Activated T-helper 1 cell treated with anti-CD3 and anti-CD28 coated beads, Interleukin-12 subunit alpha, Interleukin-12 subunit beta, Interleukin-2, Interleukin-4 antibody, amounts not matched to agents 30 ng/mL and 10 ng/mL and 1 ng/mL, durations not matched to agents 14 hours and 24 hours and 36 hours (primary cell): ENCODE measurements at regions of chrX and their contacts with region 1.

Region 1: DNA sequence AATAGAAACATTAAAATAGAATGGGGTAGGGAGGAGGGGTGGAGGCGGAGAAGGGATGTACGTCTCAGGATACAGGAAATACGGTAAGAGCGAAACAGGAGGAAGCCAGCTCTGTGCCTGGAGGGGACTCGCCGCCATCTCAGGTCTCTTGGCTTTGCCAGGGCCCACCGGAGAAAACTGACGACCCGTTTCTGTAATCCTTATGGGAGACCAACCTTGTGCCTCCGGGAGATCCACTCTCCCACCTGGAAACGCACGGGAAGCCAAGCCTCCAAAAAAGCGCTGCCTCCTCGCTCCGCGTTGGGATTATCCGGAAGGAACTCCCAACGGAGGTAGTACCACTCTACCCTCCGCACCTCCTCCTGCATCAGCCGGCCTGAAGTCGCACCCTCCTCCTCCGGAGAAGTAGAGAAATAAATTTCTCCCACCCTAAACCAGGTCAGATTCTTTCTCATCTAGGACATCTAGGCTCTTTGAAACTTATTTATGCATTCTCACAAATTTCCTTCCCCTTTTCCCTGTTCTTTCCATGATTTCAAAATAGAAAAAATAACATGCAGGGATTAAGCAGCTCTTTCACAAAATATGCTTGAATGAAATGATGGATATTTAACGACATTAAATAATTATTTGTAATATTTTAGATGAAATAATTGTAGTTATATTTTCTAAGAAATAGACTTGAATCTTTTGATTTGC is at the start of gene NBDY:
- DNase-seq: peak; percentile 2
- H3K4me3 Mint-ChIP-seq: peak within 1 kb of the TSS; percentile 92
- H3K27ac Mint-ChIP-seq: peak within 1 kb of the TSS; percentile 86
- H3K4me1 Mint-ChIP-seq: peaks cover 21% of the 10 kb centered on the region
- H3K27me3 Mint-ChIP-seq: no peaks in the 10 kb centered on the region
- total RNA-seq, gene NBDY: 29.3 and 36.7 TPM in 2 replicates

Region 2: GRCh38 chrX:55717521-55718497 is 1011.5 kb before region 1 on chrX and contains the start of gene RRAGB:
- intact Hi-C with region 1: loop called (anchors 2 kb)
- DNase-seq: peak; percentile 84
- H3K4me3 Mint-ChIP-seq: peak within 1 kb of the TSS; percentile 89
- H3K27ac Mint-ChIP-seq: peak within 1 kb of the TSS; percentile 73
- H3K4me1 Mint-ChIP-seq: peaks cover 36% of the 10 kb centered on the region
- H3K27me3 Mint-ChIP-seq: no peaks in the 10 kb centered on the region
- total RNA-seq, gene RRAGB: 4.4 and 6.1 TPM in 2 replicates

Region 3: GRCh38 chrX:56232221-56233082 is 496.8 kb before region 1 on chrX and contains the start of gene KLF8:
- intact Hi-C with region 1: loop called (anchors 1 kb)
- DNase-seq: peak; percentile 25
- H3K4me3 Mint-ChIP-seq: peak within 1 kb of the TSS; percentile 87
- H3K27ac Mint-ChIP-seq: peak within 1 kb of the TSS; percentile 78
- H3K4me1 Mint-ChIP-seq: peaks cover 35% of the 10 kb centered on the region
- H3K27me3 Mint-ChIP-seq: peaks cover 4% of the 10 kb centered on the region
- total RNA-seq, gene KLF8: 6.3 and 6.7 TPM in 2 replicates

Region 4: GRCh38 chrX:56366901-56367300 is 362.4 kb before region 1 on chrX:
- intact Hi-C with region 1: loop called (anchors 5 kb)
- DNase-seq: no peak
- H3K4me3 Mint-ChIP-seq: no peak overlapping the region
- H3K27ac Mint-ChIP-seq: no peak overlapping the region
- H3K4me1 Mint-ChIP-seq: peaks cover 56% of the 10 kb centered on the region
- H3K27me3 Mint-ChIP-seq: no peaks in the 10 kb centered on the region

Region 5: DNA sequence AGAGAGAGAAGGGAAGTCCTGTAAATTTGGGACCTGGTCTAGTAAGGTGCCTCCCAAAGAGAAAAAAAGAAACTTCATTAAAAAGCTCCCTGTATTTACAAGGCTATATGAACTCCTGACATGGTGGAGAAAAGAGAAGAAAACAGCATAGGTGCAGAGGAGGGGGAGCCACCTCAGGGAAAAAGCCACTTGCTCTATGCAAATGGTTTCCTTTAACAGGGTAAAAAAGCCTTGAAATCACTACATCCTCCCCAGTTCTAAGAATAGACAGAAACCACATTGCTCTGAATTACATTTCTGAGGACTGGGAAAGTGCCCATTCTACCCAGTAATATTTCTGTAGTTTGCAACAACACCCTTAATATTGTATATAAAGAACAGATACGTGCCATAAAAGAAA is 331.7 kb before region 1 on chrX:
- intact Hi-C with region 1: loop called (anchors 5 kb)
- DNase-seq: peak; percentile 2
- H3K4me3 Mint-ChIP-seq: peak overlapping the region; percentile 66
- H3K27ac Mint-ChIP-seq: peak overlapping the region; percentile 83
- H3K4me1 Mint-ChIP-seq: peaks cover 45% of the 10 kb centered on the region
- H3K27me3 Mint-ChIP-seq: no peaks in the 10 kb centered on the region

Region 6: DNA sequence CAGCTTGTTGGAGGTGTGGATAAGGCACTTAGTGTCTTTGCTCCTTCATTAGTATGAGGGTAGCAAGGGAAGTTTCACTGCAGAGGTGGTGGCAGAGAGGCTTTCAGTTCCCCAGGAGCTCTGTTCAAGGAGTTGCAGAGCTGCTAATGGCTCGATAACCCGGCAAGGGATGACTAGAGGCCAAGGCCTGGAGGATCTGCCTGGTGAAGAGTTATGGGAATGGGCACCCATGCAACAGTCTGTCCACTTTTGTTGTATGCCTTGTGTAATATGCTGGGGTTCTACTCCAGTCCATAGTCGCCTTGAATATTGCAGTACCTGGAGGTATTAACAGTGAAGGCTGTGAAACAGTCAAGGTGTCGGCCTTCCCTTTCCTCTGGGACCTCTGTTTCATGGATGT is 68.1 kb before region 1 on chrX:
- intact Hi-C with region 1: no loop called
- DNase-seq: no peak
- H3K4me3 Mint-ChIP-seq: no peak overlapping the region
- H3K27ac Mint-ChIP-seq: no peak overlapping the region
- H3K4me1 Mint-ChIP-seq: no peaks in the 10 kb centered on the region
- H3K27me3 Mint-ChIP-seq: no peaks in the 10 kb centered on the region